Activated T-helper 2 cell treated with anti-CD3 and anti-CD28 coated beads, Interferon-gamma antibody, Interleukin-2, Interleukin-4, amounts not matched to agents 10 μg/mL and 5 μg/mL and 100 μg/mL, durations not matched to agents 14 hours and 24 hours and 36 hours (primary cell): ENCODE measurements at regions of chr5 and their contacts with region 1.

Region 1: DNA sequence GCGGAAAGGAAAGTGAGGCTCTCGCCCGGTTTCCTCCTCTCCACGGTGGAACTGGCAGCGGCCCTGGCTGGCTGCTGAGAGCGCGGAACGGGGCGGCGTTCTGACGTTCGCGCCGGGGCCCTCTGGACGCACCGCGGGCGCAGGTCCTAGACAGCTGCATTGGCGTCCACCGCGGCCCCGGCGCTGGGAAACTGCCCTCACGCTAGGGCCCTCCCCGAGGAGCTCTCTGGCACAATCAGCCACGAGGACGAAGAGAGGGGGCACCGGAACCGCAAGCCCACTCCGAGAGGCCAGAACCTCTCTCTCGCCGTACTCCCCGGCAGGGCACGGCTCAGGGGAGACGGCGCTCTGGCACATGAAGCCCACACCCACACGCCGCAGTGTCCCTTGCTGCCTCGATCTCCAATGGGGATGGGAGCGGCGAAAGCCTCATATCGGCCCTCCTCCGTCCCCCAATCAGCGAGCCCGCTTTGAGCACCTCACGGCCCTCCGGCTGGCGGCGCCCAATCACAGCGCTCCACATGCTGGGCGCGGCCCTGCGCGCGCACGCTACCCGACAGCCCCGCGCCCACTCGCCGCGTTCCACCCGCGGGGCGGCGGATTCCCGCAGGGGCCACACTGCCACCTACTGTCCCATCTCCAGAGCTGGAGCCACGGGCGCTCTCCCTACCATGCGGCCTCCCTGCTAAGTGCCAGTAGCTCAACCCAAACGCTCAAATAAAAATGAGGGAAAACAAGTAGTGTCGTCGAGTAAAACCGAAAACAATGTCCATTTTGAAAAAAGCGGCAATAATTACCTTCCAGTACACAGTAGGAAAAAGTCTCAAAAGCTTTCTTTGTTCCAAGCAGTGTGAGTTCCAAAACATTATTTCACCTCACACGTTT is 11.8 kb downstream of the MRPS27 start:
- DNase-seq: peak; percentile 96
- H3K4me3 Mint-ChIP-seq: peak overlapping the region; percentile 84
- H3K27ac Mint-ChIP-seq: peak overlapping the region; percentile 89
- H3K4me1 Mint-ChIP-seq: peaks cover 22% of the 10 kb centered on the region
- H3K27me3 Mint-ChIP-seq: no peaks in the 10 kb centered on the region

Region 2: GRCh38 chr5:71586941-71587765 is 721.1 kb before region 1 on chr5 and contains the start of gene MCCC2:
- intact Hi-C with region 1: loop called (anchors 5 kb)
- DNase-seq: peak; percentile 97
- H3K4me3 Mint-ChIP-seq: peak within 1 kb of the TSS; percentile 94
- H3K27ac Mint-ChIP-seq: peak within 1 kb of the TSS; percentile 99
- H3K4me1 Mint-ChIP-seq: peaks cover 32% of the 10 kb centered on the region
- H3K27me3 Mint-ChIP-seq: no peaks in the 10 kb centered on the region
- total RNA-seq, gene MCCC2: 59.7 and 60.0 TPM in 2 replicates

Region 3: DNA sequence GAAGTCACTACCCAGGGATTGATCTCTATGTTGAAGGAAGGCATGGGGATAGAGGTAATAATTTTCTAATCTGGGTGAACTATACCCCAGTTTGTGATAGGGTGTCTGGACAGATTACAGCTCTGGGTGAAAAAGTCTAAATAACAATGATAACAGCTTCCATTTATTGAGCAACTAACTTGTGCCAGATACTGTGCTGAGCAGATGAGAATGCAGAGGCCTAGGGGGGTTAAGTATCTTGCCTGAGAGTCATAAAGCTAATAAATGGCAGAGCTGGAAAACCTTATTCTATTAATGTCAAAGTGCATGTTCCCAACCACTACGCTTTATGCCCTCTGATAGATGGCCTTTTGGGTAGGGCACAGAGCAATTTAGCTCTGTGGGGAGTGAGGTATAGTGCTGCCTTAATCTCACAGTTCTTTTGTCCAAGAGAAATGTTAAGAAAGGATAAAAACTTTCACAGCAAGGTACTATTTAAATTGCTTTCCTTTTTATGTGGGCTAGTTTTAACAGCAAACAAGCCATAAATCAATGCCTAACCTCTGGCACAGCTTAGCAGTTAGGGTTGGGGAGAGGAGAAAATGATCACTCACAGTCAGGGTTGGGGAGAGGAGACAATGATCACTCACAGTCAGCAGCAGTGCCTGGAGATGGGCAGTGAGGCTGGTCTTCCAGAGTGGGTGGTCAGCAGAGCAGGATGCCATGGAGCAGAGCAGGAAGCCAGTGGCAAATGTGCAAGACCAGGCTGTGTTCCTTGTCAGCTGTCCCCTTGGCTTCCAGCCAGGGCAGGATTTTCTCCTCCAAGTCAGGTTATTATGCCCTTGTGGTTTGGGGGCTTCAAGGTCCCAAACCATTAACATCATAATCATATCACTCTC is 402.1 kb before region 1 on chr5:
- intact Hi-C with region 1: no loop called
- DNase-seq: no peak
- H3K4me3 Mint-ChIP-seq: no peak overlapping the region
- H3K27ac Mint-ChIP-seq: no peak overlapping the region
- H3K4me1 Mint-ChIP-seq: no peaks in the 10 kb centered on the region
- H3K27me3 Mint-ChIP-seq: peaks cover 4% of the 10 kb centered on the region

Region 4: GRCh38 chr5:72138943-72139521 is 169.2 kb before region 1 on chr5:
- intact Hi-C with region 1: loop called (anchors 1 kb)
- DNase-seq: no peak
- H3K4me3 Mint-ChIP-seq: no peak overlapping the region
- H3K27ac Mint-ChIP-seq: no peak overlapping the region
- H3K4me1 Mint-ChIP-seq: peaks cover 22% of the 10 kb centered on the region
- H3K27me3 Mint-ChIP-seq: peaks cover 75% of the 10 kb centered on the region

Region 5: GRCh38 chr5:72319976-72320752 is 12.0 kb after region 1 on chr5 and contains the starts of genes MRPS27 and PTCD2:
- intact Hi-C with region 1: loop called (anchors 1 kb)
- DNase-seq: peak; percentile 93
- H3K4me3 Mint-ChIP-seq: peak within 1 kb of the TSS; percentile 93
- H3K27ac Mint-ChIP-seq: peak within 1 kb of the TSS; percentile 85
- H3K4me1 Mint-ChIP-seq: peaks cover 31% of the 10 kb centered on the region
- H3K27me3 Mint-ChIP-seq: no peaks in the 10 kb centered on the region
- total RNA-seq, gene MRPS27: 96.8 and 98.4 TPM in 2 replicates
- total RNA-seq, gene PTCD2: 14.7 and 16.8 TPM in 2 replicates

Region 6: DNA sequence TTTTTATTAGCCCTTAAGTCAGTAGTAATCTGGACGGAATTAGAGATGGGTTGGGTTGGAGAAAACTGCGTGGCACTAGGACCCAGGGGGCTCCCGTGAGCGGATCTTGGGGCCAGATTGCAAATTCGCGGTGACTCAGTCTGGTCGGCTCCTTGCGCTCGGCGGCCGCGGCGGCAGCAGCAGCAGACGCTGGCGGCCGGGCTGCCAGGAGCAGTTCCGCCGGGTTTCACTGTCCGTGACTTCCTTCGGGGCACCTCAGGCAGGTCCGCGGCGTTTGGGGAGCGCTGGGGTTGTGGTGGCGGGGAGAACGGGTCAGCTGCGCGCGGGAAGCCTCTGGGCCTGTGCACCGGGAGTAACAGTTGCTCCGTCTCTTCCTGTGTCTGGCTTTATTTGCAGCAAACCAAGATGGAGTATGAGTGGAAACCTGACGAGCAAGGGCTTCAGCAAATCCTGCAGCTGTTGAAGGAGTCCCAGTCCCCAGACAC is 539.8 kb after region 1 on chr5:
- intact Hi-C with region 1: loop called (anchors 2 kb)
- DNase-seq: peak; percentile 82
- H3K4me3 Mint-ChIP-seq: peak overlapping the region; percentile 95
- H3K27ac Mint-ChIP-seq: peak overlapping the region; percentile 97
- H3K4me1 Mint-ChIP-seq: peaks cover 35% of the 10 kb centered on the region
- H3K27me3 Mint-ChIP-seq: peaks cover 14% of the 10 kb centered on the region